ENCODE measurements at regions of chr12 and their contacts with region 1.

Region 1: DNA sequence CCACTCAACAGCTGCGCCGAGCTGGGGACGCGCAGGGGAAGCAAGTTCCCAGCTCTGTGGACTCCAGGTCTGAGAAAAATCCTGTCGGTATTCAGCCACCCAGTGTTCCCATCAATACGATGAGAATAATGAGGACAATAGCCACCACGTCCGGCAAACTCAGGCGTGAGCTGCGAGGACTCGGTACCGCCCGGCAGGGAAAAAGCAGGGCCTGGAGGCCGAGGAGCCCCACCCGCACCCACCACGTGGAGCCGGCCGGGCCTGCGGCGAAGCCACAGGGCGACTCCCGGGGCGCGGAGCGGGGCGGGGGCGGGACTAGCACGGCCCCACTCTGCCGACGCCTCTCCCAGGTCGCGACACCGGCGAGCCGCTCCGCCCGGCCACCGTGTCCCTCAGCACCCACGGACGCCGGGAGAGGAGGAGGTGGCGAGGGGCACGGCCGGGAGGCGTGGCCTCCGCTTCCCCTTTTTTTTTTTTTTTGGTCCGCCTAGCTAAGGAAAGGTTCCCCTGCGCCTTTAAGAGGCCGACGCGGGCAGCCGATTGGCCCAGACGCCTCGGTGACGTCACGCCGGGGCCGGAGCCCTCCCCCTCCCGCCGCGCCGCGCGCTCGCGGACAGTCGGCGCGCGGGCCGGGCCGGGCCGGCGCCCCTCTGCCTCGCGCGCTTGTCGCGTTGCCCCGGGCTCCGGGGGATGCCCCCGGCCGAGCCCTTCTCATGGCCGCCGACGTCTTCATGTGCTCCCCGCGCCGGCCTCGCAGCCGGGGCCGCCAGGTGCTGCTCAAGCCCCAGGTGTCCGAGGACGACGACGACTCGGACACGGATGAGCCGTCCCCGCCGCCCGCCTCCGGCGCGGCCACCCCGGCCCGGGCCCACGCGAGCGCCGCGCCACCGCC is at the start of gene MLXIP:
- DNase-seq: peak; percentile 77 to 95 (median 85)
- ATAC-seq: peak; percentile 91
- H3K4me3 ChIP-seq: peak within 1 kb of the TSS; percentile 66
- H3K4me3 Mint-ChIP-seq: peak within 1 kb of the TSS; percentile 85 to 100 (median 98)
- H3K27ac ChIP-seq: peak within 1 kb of the TSS; percentile 82
- H3K27ac Mint-ChIP-seq: peak within 1 kb of the TSS; percentile 82 to 99 (median 88)
- H3K4me1 ChIP-seq: peaks cover 22 to 32% of the 10 kb centered on the region in 2 donors
- H3K4me1 Mint-ChIP-seq: peaks cover 7 to 45% (median 28%) of the 10 kb centered on the region in 7 donors
- H3K27me3 ChIP-seq: no peaks in the 10 kb centered on the region
- H3K27me3 Mint-ChIP-seq: no peaks in the 10 kb centered on the region
- total RNA-seq, gene MLXIP: 57.0 to 123 (median 115) TPM

Region 2: DNA sequence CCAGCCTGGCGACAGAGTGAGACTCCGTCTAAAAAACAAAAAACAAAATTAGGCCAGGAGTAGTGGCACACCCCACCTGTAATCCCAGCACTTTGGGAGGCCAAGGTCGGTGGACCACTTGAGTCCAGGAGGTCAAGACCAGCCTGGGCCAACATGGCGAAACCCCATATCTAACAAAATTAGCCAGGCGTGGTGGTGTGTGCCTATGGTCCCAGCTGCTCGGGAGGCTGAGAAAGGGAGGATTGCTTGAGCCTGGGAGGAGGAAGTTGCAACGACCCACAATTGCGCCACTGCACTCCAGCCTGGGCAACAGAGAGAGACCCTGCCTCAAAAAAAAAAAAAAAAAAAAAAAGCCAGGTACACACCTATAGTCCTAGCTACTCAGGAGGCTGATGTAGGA is 534.6 kb before region 1 on chr12:
- CTCF ChIA-PET with region 1: no interaction called
- POLR2A ChIA-PET with region 1: no interaction called
- intact Hi-C with region 1: no loop called
- DNase-seq: no peak
- ATAC-seq: no peak
- H3K4me3 ChIP-seq: no peak overlapping the region
- H3K4me3 Mint-ChIP-seq: no peak overlapping the region
- H3K27ac ChIP-seq: no peak overlapping the region
- H3K27ac Mint-ChIP-seq: no peak overlapping the region
- H3K4me1 ChIP-seq: peaks cover 1 to 2% of the 10 kb centered on the region in 2 donors
- H3K4me1 Mint-ChIP-seq: peaks cover 3 to 16% (median 5%) of the 10 kb centered on the region in 7 donors
- H3K27me3 ChIP-seq: no peaks in the 10 kb centered on the region
- H3K27me3 Mint-ChIP-seq: no peaks in the 10 kb centered on the region

Region 3: DNA sequence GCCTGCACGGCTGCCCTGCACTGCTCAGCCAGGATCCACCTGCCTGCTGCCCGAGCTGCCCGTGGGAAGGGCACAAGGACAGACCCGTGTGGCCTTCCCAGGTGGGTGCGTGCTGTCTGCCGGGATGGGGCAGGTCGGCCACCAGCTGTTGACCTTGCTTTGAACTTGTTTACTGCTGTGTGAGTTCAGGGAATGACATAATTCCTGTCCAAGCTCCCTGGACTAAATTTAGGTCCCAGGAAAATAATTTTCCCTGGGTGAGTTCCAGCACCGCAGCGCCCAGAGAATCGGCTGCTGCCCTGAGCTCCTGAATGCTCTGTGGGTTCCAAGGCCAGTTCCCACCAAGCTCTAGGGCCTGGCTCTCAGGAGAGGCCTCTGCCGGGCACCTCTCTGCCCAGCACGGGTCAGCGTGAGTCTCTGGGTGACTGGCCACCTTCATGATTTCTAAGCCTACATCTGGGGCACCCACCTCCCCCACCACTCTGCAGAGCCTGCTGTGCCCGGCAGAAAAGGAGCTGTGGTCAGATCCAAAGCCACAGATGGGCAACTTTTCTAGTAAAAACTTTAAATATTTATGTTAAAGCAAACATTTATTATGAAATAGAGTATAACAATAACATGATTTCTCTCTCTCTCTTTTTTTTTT is 27.0 kb before region 1 on chr12:
- CTCF ChIA-PET with region 1: interaction called, 8 read pairs
- POLR2A ChIA-PET with region 1: interaction called, 4 read pairs
- intact Hi-C with region 1: loop called (anchors 1 kb)
- DNase-seq: no peak
- ATAC-seq: no peak
- H3K4me3 ChIP-seq: no peak overlapping the region
- H3K4me3 Mint-ChIP-seq: no peak overlapping the region
- H3K27ac ChIP-seq: no peak overlapping the region
- H3K27ac Mint-ChIP-seq: no peak overlapping the region
- H3K4me1 ChIP-seq: no peaks in the 10 kb centered on the region
- H3K4me1 Mint-ChIP-seq: peaks cover 0 to 7% (median 5%) of the 10 kb centered on the region in 7 donors
- H3K27me3 ChIP-seq: no peaks in the 10 kb centered on the region
- H3K27me3 Mint-ChIP-seq: no peaks in the 10 kb centered on the region

Region 4: GRCh38 chr12:122090759-122091515 is 12.6 kb after region 1 on chr12:
- CTCF ChIA-PET with region 1: interaction called, 4 read pairs
- POLR2A ChIA-PET with region 1: interaction called, 150 read pairs
- intact Hi-C with region 1: loop called in 1 of 2 experiments (anchors 1 kb)
- DNase-seq: no peak
- ATAC-seq: no peak
- H3K4me3 ChIP-seq: no peak overlapping the region
- H3K4me3 Mint-ChIP-seq: peak overlapping the region in 5 of 10 donors; percentile 30 to 78 (median 63)
- H3K27ac ChIP-seq: no peak overlapping the region
- H3K27ac Mint-ChIP-seq: peak overlapping the region in 3 of 9 donors; percentile 16 to 89 (median 72)
- H3K4me1 ChIP-seq: peaks cover 7 to 88% of the 10 kb centered on the region in 2 donors
- H3K4me1 Mint-ChIP-seq: peaks cover under 1 to 59% (median 28%) of the 10 kb centered on the region in 7 donors
- H3K27me3 ChIP-seq: no peaks in the 10 kb centered on the region
- H3K27me3 Mint-ChIP-seq: no peaks in the 10 kb centered on the region

Region 5: DNA sequence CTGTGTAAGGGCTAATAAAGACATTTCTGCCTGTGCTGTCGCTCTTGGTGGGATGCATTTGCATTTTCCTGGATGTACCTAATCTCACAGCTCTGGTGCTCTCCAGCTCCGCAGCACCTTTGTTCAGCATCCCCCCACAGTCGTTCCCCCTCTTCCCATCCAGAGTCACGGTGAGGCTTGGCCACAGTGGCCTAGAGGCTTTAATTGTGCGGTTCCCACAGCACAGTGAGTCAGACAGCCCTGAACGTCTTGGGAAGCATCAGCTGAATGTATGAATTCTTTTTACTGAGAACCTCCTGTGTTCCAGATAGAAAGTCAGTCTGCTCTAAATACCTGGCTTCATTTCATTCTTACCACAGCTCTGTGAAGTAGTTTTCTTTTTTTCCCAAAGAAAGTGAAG is 28.9 kb after region 1 on chr12:
- CTCF ChIA-PET with region 1: interaction called, 30 read pairs
- POLR2A ChIA-PET with region 1: interaction called, 150 read pairs
- intact Hi-C with region 1: loop called in 1 of 2 experiments (anchors 1 kb)
- DNase-seq: no peak
- ATAC-seq: no peak
- H3K4me3 ChIP-seq: no peak overlapping the region
- H3K4me3 Mint-ChIP-seq: peak overlapping the region in 7 of 10 donors; percentile 13 to 68 (median 38)
- H3K27ac ChIP-seq: no peak overlapping the region
- H3K27ac Mint-ChIP-seq: peak overlapping the region in 5 of 9 donors; percentile 79 to 93 (median 88)
- H3K4me1 ChIP-seq: peaks cover 14 to 44% of the 10 kb centered on the region in 2 donors
- H3K4me1 Mint-ChIP-seq: peaks cover 58 to 88% (median 79%) of the 10 kb centered on the region in 7 donors
- H3K27me3 ChIP-seq: no peaks in the 10 kb centered on the region
- H3K27me3 Mint-ChIP-seq: no peaks in the 10 kb centered on the region

Region 6: DNA sequence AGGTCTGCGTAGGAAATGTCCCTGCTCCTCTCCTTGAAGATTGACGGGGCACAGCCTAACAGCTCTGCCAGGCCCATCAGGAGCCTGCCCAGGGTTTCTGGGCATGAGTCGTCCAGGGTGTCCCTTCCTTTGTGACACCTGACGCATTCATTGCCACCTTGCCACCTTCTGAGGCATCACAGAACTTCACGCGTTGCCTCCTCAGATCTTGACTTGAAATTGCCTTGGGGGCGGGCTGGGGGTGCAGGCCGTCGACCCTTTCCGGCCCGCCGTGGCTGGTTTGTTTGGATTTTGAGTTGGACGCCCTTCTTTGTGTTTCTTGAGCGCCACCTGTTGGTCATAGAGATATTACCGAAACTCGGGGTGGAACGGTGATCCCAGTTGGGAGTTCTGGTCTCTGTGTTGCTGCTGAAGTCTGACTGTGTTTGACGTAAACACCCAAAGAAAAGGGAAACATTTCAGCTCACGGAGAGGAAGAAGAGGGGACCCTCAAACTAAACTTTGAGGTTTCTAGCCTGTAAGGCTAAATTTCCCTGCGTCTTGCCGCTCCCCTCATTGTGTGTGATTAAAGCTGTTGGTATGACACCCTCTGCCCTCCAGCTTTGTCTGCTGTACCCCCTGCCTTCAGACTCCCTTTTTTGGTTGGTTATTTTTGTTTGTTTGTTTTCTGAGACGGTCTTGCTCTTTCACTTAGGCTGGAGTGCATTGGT is 44.8 kb after region 1 on chr12:
- CTCF ChIA-PET with region 1: interaction called, 8 read pairs
- POLR2A ChIA-PET with region 1: interaction called, 4 read pairs
- intact Hi-C with region 1: loop called (anchors 1 kb)
- DNase-seq: peak; percentile 52 to 82 (median 68)
- ATAC-seq: peak; percentile 73
- H3K4me3 ChIP-seq: no peak overlapping the region
- H3K4me3 Mint-ChIP-seq: peak overlapping the region; percentile 26 to 80 (median 59)
- H3K27ac ChIP-seq: peak overlapping the region; percentile 23
- H3K27ac Mint-ChIP-seq: peak overlapping the region; percentile 25 to 94 (median 80)
- H3K4me1 ChIP-seq: peaks cover 7 to 8% of the 10 kb centered on the region in 2 donors
- H3K4me1 Mint-ChIP-seq: peaks cover 30 to 51% (median 45%) of the 10 kb centered on the region in 7 donors
- H3K27me3 ChIP-seq: no peaks in the 10 kb centered on the region
- H3K27me3 Mint-ChIP-seq: no peaks in the 10 kb centered on the region

Region 7: DNA sequence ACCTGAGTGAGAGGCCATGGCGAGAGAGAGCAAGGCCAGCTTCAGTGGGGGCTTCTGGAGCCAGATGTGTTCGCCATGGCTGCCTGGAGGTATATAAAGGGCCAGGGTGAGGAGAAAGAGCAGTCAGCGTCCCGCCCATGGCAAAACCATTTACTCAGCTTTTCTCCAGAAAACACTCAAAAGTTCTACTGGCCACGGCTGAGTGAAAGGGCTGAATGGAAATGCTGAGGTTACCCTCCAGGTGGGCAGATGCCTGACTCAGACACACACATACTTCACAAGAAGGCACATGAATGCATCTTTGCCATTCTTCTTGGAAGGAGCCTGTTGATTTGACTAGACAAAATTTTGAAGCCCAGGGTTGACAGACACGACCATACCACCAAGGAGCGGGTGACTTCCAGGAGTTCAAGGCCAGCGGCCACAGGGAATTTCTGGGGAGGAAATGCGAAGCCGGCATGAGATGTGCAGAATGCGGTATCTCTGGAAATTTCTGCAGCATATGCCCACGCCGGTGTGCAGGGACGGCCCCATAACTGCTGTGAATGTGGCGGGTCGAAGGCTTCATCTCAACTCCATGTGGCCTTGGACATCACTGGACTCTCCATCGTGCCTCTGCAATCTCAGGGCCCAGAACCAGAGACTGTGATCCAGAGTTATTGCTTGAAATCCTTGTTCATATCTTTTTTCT is 95.9 kb after region 1 on chr12 and contains the start of gene IL31:
- CTCF ChIA-PET with region 1: no interaction called
- POLR2A ChIA-PET with region 1: no interaction called
- intact Hi-C with region 1: no loop called
- DNase-seq: no peak
- ATAC-seq: no peak
- H3K4me3 ChIP-seq: no peak within 1 kb of the TSS
- H3K4me3 Mint-ChIP-seq: no peak within 1 kb of the TSS
- H3K27ac ChIP-seq: no peak within 1 kb of the TSS
- H3K27ac Mint-ChIP-seq: peak within 1 kb of the TSS in 1 of 9 donors; percentile 26
- H3K4me1 ChIP-seq: no peaks in the 10 kb centered on the region
- H3K4me1 Mint-ChIP-seq: peaks cover 0 to 1% (median 0%) of the 10 kb centered on the region in 7 donors
- H3K27me3 ChIP-seq: no peaks in the 10 kb centered on the region
- H3K27me3 Mint-ChIP-seq: peaks cover 0 to 5% (median 0%) of the 10 kb centered on the region in 5 donors
- total RNA-seq, gene IL31: not detected

Measured in naive thymus-derived CD4-positive, alpha-beta T cell (primary cell).